Aorta (tissue), 5 donors: ENCODE measurements at regions of chr15 and their contacts with region 1.

Region 1: GRCh38 chr15:91055548-91056331 is 33.3 kb upstream of the VPS33B start:
- DNase-seq: no peak
- ATAC-seq: peak; percentile 65
- H3K4me3 ChIP-seq: no peak overlapping the region
- H3K27ac ChIP-seq: no peak overlapping the region
- H3K4me1 ChIP-seq: no peaks in the 10 kb centered on the region
- H3K27me3 ChIP-seq: no peaks in the 10 kb centered on the region

Region 2: GRCh38 chr15:91253605-91254004 is 197.9 kb after region 1 on chr15:
- intact Hi-C with region 1: no loop called
- DNase-seq: no peak
- ATAC-seq: no peak
- H3K4me3 ChIP-seq: no peak overlapping the region
- H3K27ac ChIP-seq: no peak overlapping the region
- H3K4me1 ChIP-seq: no peaks in the 10 kb centered on the region
- H3K27me3 ChIP-seq: no peaks in the 10 kb centered on the region

Region 3: GRCh38 chr15:91271565-91272153 is 215.9 kb after region 1 on chr15:
- intact Hi-C with region 1: loop called (anchors 1 to 2 kb)
- DNase-seq: no peak
- ATAC-seq: peak; percentile 87
- H3K4me3 ChIP-seq: no peak overlapping the region
- H3K27ac ChIP-seq: no peak overlapping the region
- H3K4me1 ChIP-seq: no peaks in the 10 kb centered on the region
- H3K27me3 ChIP-seq: no peaks in the 10 kb centered on the region

Region 4: DNA sequence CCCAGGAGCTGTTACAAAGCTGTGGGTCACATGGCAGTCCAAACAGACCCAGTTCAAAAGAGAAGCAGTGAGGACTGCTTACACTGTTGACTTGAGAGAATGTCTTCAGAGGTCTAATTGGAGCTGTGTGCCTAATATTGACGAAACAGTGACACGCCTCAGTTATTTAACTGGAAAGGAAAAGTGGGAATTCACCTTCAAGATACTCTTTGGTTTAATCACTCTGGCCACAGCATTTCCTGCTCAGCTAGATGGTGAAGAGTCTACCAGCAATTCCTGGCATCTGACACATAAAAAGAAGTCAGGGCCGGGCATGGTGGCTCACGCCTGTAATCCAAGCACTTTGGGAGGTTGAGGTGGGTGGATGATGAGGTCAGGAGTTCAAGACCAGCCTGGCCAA is 370.7 kb after region 1 on chr15:
- intact Hi-C with region 1: no loop called
- DNase-seq: no peak
- ATAC-seq: no peak
- H3K4me3 ChIP-seq: no peak overlapping the region
- H3K27ac ChIP-seq: no peak overlapping the region
- H3K4me1 ChIP-seq: no peaks in the 10 kb centered on the region
- H3K27me3 ChIP-seq: no peaks in the 10 kb centered on the region